ENCODE measurements at regions of chr6 and their contacts with region 1.

Region 1: DNA sequence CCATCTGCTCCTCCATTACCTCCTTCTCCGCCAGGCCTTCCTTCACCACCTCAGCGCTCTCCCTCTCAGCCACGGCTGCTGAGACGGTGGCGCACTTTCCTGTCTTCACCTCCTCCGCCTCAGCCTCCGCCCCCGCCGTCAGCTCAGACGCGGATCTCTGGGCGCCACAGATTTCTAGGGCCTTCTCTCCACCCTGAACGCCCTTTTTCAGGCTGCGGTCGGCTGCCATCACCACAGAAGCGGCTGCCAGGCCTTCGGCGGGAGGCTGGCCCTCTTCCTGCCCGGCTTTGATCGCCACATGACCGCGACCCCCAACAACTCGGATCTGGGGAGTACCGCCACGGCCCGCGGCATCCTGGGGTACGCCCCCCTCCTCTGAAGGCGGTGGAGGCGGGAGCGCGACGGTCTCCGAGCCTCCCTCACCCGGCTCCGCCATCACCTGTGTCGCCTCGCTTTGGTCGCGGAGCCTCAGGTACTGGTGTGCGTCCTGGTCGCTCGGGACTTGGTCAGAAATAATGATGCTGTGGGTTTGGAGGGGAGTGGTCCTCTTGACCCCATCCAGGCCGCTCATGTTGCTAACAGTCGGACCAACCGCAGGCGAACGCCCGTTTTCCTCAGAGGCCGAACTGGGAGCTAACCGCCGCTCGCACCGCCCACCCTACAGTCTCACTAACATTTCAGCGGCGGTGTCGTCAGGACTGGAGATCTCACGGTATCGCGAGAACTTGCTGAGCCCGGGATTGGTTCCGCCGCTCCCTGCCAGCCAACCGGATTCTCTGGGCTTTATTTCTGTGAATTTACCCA is at the start of gene TSPYL1:
- DNase-seq: peak; percentile 98
- ATAC-seq: peak; percentile 88
- H3K4me3 ChIP-seq: peak within 1 kb of the TSS; percentile 89 to 96 (median 94)
- H3K4me3 Mint-ChIP-seq: peak within 1 kb of the TSS; percentile 97
- H3K27ac ChIP-seq: peak within 1 kb of the TSS; percentile 99
- H3K27ac Mint-ChIP-seq: peak within 1 kb of the TSS; percentile 100
- H3K4me1 ChIP-seq: peaks cover 41 to 48% of the 10 kb centered on the region in 2 donors
- H3K4me1 Mint-ChIP-seq: peaks cover 60% of the 10 kb centered on the region
- H3K27me3 ChIP-seq: no peaks in the 10 kb centered on the region
- H3K27me3 Mint-ChIP-seq: no peaks in the 10 kb centered on the region
- CTCF ChIP-seq: no peak
- total RNA-seq, gene TSPYL1: 98.9 and 101 TPM in 2 replicates

Region 2: GRCh38 chr6:116268589-116269293 is 10.7 kb before region 1 on chr6:
- CTCF ChIA-PET with region 1: interaction called, 11 read pairs
- POLR2A ChIA-PET with region 1: no interaction called
- intact Hi-C with region 1: loop called (anchors 1 kb)
- DNase-seq: peak; percentile 71
- ATAC-seq: peak; percentile 77
- H3K4me3 ChIP-seq: no peak overlapping the region
- H3K4me3 Mint-ChIP-seq: no peak overlapping the region
- H3K27ac ChIP-seq: no peak overlapping the region
- H3K27ac Mint-ChIP-seq: no peak overlapping the region
- H3K4me1 ChIP-seq: no peaks in the 10 kb centered on the region
- H3K4me1 Mint-ChIP-seq: peaks cover 22% of the 10 kb centered on the region
- H3K27me3 ChIP-seq: no peaks in the 10 kb centered on the region
- H3K27me3 Mint-ChIP-seq: no peaks in the 10 kb centered on the region
- CTCF ChIP-seq: peak; percentile 75

Region 3: GRCh38 chr6:116561377-116562018 is 282.0 kb after region 1 on chr6:
- CTCF ChIA-PET with region 1: interaction called, 15 read pairs
- POLR2A ChIA-PET with region 1: no interaction called
- intact Hi-C with region 1: no loop called
- DNase-seq: peak; percentile 78
- ATAC-seq: peak; percentile 82
- H3K4me3 ChIP-seq: no peak overlapping the region
- H3K4me3 Mint-ChIP-seq: no peak overlapping the region
- H3K27ac ChIP-seq: no peak overlapping the region
- H3K27ac Mint-ChIP-seq: no peak overlapping the region
- H3K4me1 ChIP-seq: peaks cover 5 to 7% of the 10 kb centered on the region in 2 donors
- H3K4me1 Mint-ChIP-seq: peaks cover 4% of the 10 kb centered on the region
- H3K27me3 ChIP-seq: peaks cover 0 to 14% (median 9%) of the 10 kb centered on the region in 4 experiments
- H3K27me3 Mint-ChIP-seq: peaks cover 31% of the 10 kb centered on the region
- CTCF ChIP-seq: peak; percentile 98

Region 4: DNA sequence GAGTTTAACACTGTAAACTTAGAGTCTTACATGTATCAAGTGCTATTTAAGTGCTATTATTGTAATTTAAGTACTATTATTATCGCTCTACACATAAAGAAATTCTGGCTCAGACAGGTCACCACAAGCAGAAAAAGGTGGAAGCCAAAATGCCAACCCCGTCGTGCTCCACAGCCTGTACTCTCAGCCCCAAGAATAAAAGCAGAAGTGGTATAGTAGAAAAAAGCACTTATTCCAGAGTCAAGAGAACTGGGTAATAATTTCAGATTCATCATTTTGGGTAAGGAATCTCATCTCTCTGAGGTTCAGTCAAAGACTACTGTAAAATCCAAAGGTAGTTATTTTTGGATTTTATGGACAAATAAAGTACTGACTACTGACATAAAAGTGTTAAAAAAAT is 388.2 kb after region 1 on chr6:
- CTCF ChIA-PET with region 1: no interaction called
- POLR2A ChIA-PET with region 1: interaction called, 4 read pairs
- intact Hi-C with region 1: loop called (anchors 1 kb)
- DNase-seq: peak; percentile 76
- ATAC-seq: peak; percentile 52
- H3K4me3 ChIP-seq: peak overlapping the region; percentile 73 to 96 (median 91)
- H3K4me3 Mint-ChIP-seq: peak overlapping the region; percentile 100
- H3K27ac ChIP-seq: peak overlapping the region; percentile 88 to 92
- H3K27ac Mint-ChIP-seq: peak overlapping the region; percentile 61
- H3K4me1 ChIP-seq: peaks cover 15 to 26% of the 10 kb centered on the region in 2 donors
- H3K4me1 Mint-ChIP-seq: peaks cover 36% of the 10 kb centered on the region
- H3K27me3 ChIP-seq: no peaks in the 10 kb centered on the region
- H3K27me3 Mint-ChIP-seq: peaks cover 11% of the 10 kb centered on the region
- CTCF ChIP-seq: no peak